H1 (cell line): ENCODE measurements at regions of chr1 and their contacts with region 1.

Region 1: GRCh38 chr1:99691175-99691574 is 45.3 kb downstream of the PALMD start:
- DNase-seq: no peak
- H3K4me3 ChIP-seq: no peak overlapping the region
- H3K27ac ChIP-seq: no peak overlapping the region
- H3K4me1 ChIP-seq: no peaks in the 10 kb centered on the region
- H3K27me3 ChIP-seq: no peaks in the 10 kb centered on the region
- CTCF ChIP-seq: no peak
- EP300 ChIP-seq: no peak
- POLR2A ChIP-seq: no peak
- RAD21 ChIP-seq: no peak

Region 2: GRCh38 chr1:99570486-99571103 is 120.6 kb before region 1 on chr1:
- CTCF ChIA-PET with region 1: no interaction called
- POLR2A ChIA-PET with region 1: no interaction called
- DNase-seq: no peak
- H3K4me3 ChIP-seq: no peak overlapping the region
- H3K27ac ChIP-seq: no peak overlapping the region
- H3K4me1 ChIP-seq: no peaks in the 10 kb centered on the region
- H3K27me3 ChIP-seq: peaks cover 0 to 1% (median 0%) of the 10 kb centered on the region in 4 experiments; a peak in 1 of 7 replicates
- CTCF ChIP-seq: no peak
- EP300 ChIP-seq: no peak
- POLR2A ChIP-seq: no peak
- RAD21 ChIP-seq: no peak

Region 3: GRCh38 chr1:99707535-99708142 is 16.5 kb after region 1 on chr1:
- CTCF ChIA-PET with region 1: interaction called, 24 read pairs
- POLR2A ChIA-PET with region 1: no interaction called
- DNase-seq: peak in 1 of 2 experiments; percentile 82
- H3K4me3 ChIP-seq: no peak overlapping the region
- H3K27ac ChIP-seq: no peak overlapping the region
- H3K4me1 ChIP-seq: no peaks in the 10 kb centered on the region
- H3K27me3 ChIP-seq: no peaks in the 10 kb centered on the region
- CTCF ChIP-seq: peak in 2 of 3 experiments; percentile 71 to 84; a peak in 3 of 4 replicates
- EP300 ChIP-seq: no peak
- POLR2A ChIP-seq: no peak
- RAD21 ChIP-seq: peak; percentile 94 to 95

Region 4: GRCh38 chr1:99735852-99736251 is 44.7 kb after region 1 on chr1:
- CTCF ChIA-PET with region 1: no interaction called
- POLR2A ChIA-PET with region 1: no interaction called
- DNase-seq: no peak
- H3K4me3 ChIP-seq: no peak overlapping the region
- H3K27ac ChIP-seq: no peak overlapping the region
- H3K4me1 ChIP-seq: no peaks in the 10 kb centered on the region
- H3K27me3 ChIP-seq: no peaks in the 10 kb centered on the region
- CTCF ChIP-seq: no peak
- EP300 ChIP-seq: no peak
- POLR2A ChIP-seq: no peak
- RAD21 ChIP-seq: no peak

Region 5: GRCh38 chr1:99766378-99766800 is 75.2 kb after region 1 on chr1 and contains the start of gene FRRS1:
- CTCF ChIA-PET with region 1: no interaction called
- POLR2A ChIA-PET with region 1: no interaction called
- DNase-seq: peak in 1 of 2 experiments; percentile 29
- H3K4me3 ChIP-seq: peak within 1 kb of the TSS; percentile 42 to 71 (median 62)
- H3K27ac ChIP-seq: no peak within 1 kb of the TSS
- H3K4me1 ChIP-seq: peaks cover 0 to 3% (median 2%) of the 10 kb centered on the region in 4 experiments; a peak in 2 of 7 replicates
- H3K27me3 ChIP-seq: no peaks in the 10 kb centered on the region
- CTCF ChIP-seq: no peak
- EP300 ChIP-seq: no peak
- POLR2A ChIP-seq: peak in 1 of 2 experiments; percentile 21; a peak in 1 of 3 replicates
- RAD21 ChIP-seq: no peak
- total RNA-seq, gene FRRS1: 5.6 and 6.5 TPM in 2 replicates

Region 6: GRCh38 chr1:99806882-99807281 is 115.7 kb after region 1 on chr1:
- CTCF ChIA-PET with region 1: no interaction called
- POLR2A ChIA-PET with region 1: no interaction called
- DNase-seq: no peak
- H3K4me3 ChIP-seq: no peak overlapping the region
- H3K27ac ChIP-seq: no peak overlapping the region
- H3K4me1 ChIP-seq: no peaks in the 10 kb centered on the region
- H3K27me3 ChIP-seq: no peaks in the 10 kb centered on the region
- CTCF ChIP-seq: no peak
- EP300 ChIP-seq: no peak
- POLR2A ChIP-seq: no peak
- RAD21 ChIP-seq: no peak